A549 (cell line): ENCODE measurements at regions of chr3 and their contacts with region 1.

Region 1: GRCh38 chr3:138915503-138916498 is 31.1 kb downstream of the FOXL2 start:
- DNase-seq: peak; percentile 79 to 82
- ATAC-seq: peak; percentile 94 to 96
- H3K4me3 ChIP-seq: peak overlapping the region; percentile 76
- H3K27ac ChIP-seq: peak overlapping the region; percentile 95 to 97
- H3K4me1 ChIP-seq: peaks cover 5% of the 10 kb centered on the region; the same call in 1 of the 3 replicates
- CTCF ChIP-seq: peak; percentile 70
- EP300 ChIP-seq: no peak
- POLR2A ChIP-seq: peak; percentile 18; the same call in 1 of the 2 replicates
- RAD21 ChIP-seq: peak; percentile 69 to 77

Region 2: DNA sequence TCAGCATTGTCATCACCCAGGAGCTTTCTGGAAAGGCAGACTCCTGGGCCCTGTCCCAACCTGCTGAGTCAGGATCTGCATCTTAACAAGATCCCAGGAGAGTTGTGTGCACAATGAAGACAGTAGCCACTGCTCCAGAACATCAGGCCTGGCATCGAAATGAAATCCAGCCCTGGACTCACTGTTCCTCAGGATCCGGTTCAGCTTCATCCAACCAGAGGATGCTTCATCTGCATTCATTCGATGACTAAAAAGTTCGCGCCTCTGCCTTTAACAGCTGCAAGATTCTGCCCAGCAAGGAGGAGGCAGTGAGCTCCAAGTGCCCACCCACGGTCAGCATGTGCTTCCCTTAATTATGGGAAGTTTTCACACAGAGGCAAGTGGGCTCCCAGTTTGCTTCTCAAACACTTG is 507.0 kb before region 1 on chr3:
- CTCF ChIA-PET with region 1: interaction called, 65 read pairs
- POLR2A ChIA-PET with region 1: interaction called, 14 read pairs
- DNase-seq: no peak
- ATAC-seq: no peak
- H3K4me3 ChIP-seq: no peak overlapping the region
- H3K27ac ChIP-seq: no peak overlapping the region
- H3K4me1 ChIP-seq: no peaks in the 10 kb centered on the region
- CTCF ChIP-seq: no peak
- EP300 ChIP-seq: no peak
- POLR2A ChIP-seq: no peak
- RAD21 ChIP-seq: no peak

Region 3: GRCh38 chr3:138608322-138609135 is 307.3 kb before region 1 on chr3 and contains the start of gene FAIM:
- CTCF ChIA-PET with region 1: interaction called, 17 read pairs
- POLR2A ChIA-PET with region 1: interaction called, 3 read pairs
- DNase-seq: peak; percentile 46 to 78
- ATAC-seq: peak; percentile 89
- H3K4me3 ChIP-seq: peak within 1 kb of the TSS; percentile 60
- H3K27ac ChIP-seq: peak within 1 kb of the TSS; percentile 99 to 100
- H3K4me1 ChIP-seq: peaks cover 11% of the 10 kb centered on the region; the same call in 2 of the 3 replicates
- CTCF ChIP-seq: no peak
- EP300 ChIP-seq: no peak
- POLR2A ChIP-seq: peak; percentile 29; the same call in 1 of the 2 replicates
- RAD21 ChIP-seq: no peak
- polyA plus RNA-seq, gene FAIM: 7.3 and 13.7 TPM in 2 replicates

Region 4: GRCh38 chr3:138705675-138706074 is 210.1 kb before region 1 on chr3:
- CTCF ChIA-PET with region 1: interaction called, 143 read pairs
- POLR2A ChIA-PET with region 1: no interaction called
- DNase-seq: no peak
- ATAC-seq: no peak
- H3K4me3 ChIP-seq: no peak overlapping the region
- H3K27ac ChIP-seq: no peak overlapping the region
- H3K4me1 ChIP-seq: no peaks in the 10 kb centered on the region
- CTCF ChIP-seq: no peak
- EP300 ChIP-seq: no peak
- POLR2A ChIP-seq: no peak
- RAD21 ChIP-seq: no peak

Region 5: DNA sequence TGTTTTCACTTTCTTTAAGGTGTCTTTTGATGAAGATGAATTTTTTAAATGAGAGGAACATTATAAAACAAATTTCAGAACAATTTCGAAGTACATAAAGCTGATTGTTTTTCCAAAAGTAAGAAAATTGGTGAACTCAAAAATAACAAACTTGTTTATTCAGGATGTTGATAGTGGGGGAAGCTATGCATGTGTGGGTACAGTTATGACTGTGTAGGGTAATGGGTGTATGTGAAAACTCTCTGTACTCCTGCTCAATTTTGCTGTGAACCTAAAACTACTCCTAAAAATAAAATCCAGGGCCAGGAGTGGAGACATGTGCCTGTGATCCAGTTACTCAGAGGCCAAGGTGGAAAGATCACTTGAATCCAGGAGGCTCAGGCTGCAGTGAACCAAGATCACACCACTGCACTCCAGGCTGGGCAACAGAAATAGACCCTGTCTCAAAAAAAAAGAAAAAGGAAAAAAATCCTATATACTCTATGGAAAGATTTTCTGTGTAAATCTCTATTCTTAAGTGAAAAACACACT is 118.2 kb before region 1 on chr3:
- CTCF ChIA-PET with region 1: interaction called, 12 read pairs
- POLR2A ChIA-PET with region 1: no interaction called
- DNase-seq: no peak
- ATAC-seq: no peak
- H3K4me3 ChIP-seq: no peak overlapping the region
- H3K27ac ChIP-seq: no peak overlapping the region
- H3K4me1 ChIP-seq: no peaks in the 10 kb centered on the region
- CTCF ChIP-seq: no peak
- EP300 ChIP-seq: no peak
- POLR2A ChIP-seq: no peak
- RAD21 ChIP-seq: no peak

Region 6: DNA sequence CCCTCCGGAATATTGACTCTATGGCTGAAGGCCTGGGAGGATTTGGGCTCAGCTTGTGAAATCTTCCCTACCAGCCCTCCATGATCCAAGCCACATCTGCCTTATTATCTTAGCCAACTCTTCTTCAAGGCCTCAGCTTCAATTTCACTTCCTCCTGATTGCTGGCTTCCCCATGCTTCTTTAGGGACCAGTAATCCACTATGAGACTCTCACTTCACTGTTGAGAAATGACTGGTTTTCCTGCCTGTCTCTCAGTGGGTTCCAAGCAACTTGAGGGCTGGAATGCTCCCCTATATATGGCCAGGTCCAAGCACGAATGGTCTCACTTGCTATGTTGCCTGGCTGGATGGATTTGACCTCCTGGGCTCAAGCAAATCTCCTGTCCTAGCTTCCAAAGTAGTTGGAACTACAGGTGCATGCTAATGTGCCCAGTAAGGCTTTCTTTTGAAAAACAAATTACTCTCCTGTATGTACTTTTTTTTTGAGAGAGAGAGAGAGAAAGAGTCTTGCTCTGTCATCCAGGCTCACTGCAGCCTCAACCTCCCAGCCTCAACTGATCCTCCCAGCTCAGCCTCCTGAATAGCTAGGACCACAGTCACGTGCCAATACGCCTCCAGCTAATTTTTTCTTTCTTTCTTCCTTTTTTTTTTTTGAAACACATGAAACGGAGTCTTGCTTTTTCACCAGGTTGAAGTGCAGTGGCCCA is 73.2 kb before region 1 on chr3:
- CTCF ChIA-PET with region 1: interaction called, 20 read pairs
- POLR2A ChIA-PET with region 1: no interaction called
- DNase-seq: no peak
- ATAC-seq: no peak
- H3K4me3 ChIP-seq: no peak overlapping the region
- H3K27ac ChIP-seq: no peak overlapping the region
- H3K4me1 ChIP-seq: no peaks in the 10 kb centered on the region
- CTCF ChIP-seq: no peak
- EP300 ChIP-seq: no peak
- POLR2A ChIP-seq: no peak
- RAD21 ChIP-seq: no peak